ENCODE measurements at regions of chr2 and their contacts with region 1.

Region 1: DNA sequence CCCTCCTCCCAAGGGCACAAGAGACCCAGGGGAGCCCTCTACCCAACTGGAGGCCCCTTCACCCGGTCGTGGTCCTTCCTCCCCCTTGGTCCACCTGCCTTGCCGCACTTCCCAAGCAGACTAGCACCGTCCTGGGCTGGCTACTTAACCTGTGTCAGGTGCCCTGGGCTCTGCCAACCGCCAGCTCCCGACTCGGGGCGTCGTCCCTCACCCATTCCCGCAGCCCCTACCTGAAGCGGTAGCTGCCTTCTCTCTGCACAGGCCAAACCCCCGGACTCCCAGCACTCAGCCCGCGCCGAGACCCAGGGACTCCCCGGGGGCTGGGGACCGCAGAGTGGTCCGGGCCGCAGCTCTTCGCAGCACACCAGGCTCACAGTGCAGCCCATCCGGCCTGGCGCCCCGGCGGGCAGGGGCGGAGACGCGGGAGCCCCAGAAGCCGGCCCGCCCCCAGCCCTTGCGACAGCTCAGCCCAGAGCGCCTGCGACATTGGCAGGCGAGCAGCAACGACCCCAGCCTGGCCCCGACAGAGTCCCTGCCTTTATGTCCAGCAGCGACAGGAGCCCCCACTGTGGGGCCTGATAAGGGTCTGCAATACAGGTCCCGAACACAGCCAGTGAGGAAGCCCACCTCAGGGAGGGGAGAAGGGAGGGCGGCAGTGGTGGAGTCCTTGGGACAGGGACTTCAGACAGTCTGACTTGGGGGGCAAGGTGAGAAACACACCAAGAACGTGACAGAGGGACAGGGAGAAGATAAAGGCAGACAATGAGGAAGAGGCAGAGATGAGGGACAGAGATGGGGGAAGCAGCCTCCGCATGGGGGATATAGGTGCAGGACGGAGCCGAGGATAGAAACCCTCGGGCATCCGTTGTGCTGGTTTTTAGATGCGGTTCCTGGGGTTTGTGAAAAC is 31.0 kb upstream of the TNS1 start:
- DNase-seq: no peak
- H3K4me3 Mint-ChIP-seq: peak overlapping the region; percentile 58
- H3K27ac Mint-ChIP-seq: no peak overlapping the region
- H3K4me1 Mint-ChIP-seq: peaks cover 3% of the 10 kb centered on the region
- H3K27me3 Mint-ChIP-seq: no peaks in the 10 kb centered on the region

Region 2: GRCh38 chr2:217851191-217852020 is 182.4 kb before region 1 on chr2:
- CTCF ChIA-PET with region 1: no interaction called
- intact Hi-C with region 1: no loop called
- DNase-seq: no peak
- H3K4me3 Mint-ChIP-seq: no peak overlapping the region
- H3K27ac Mint-ChIP-seq: no peak overlapping the region
- H3K4me1 Mint-ChIP-seq: no peaks in the 10 kb centered on the region
- H3K27me3 Mint-ChIP-seq: peaks cover 2% of the 10 kb centered on the region

Region 3: GRCh38 chr2:217886720-217887309 is 147.0 kb before region 1 on chr2:
- CTCF ChIA-PET with region 1: interaction called, 5 read pairs
- intact Hi-C with region 1: loop called (anchors 2 kb)
- DNase-seq: peak; percentile 84
- H3K4me3 Mint-ChIP-seq: no peak overlapping the region
- H3K27ac Mint-ChIP-seq: no peak overlapping the region
- H3K4me1 Mint-ChIP-seq: no peaks in the 10 kb centered on the region
- H3K27me3 Mint-ChIP-seq: no peaks in the 10 kb centered on the region

Region 4: DNA sequence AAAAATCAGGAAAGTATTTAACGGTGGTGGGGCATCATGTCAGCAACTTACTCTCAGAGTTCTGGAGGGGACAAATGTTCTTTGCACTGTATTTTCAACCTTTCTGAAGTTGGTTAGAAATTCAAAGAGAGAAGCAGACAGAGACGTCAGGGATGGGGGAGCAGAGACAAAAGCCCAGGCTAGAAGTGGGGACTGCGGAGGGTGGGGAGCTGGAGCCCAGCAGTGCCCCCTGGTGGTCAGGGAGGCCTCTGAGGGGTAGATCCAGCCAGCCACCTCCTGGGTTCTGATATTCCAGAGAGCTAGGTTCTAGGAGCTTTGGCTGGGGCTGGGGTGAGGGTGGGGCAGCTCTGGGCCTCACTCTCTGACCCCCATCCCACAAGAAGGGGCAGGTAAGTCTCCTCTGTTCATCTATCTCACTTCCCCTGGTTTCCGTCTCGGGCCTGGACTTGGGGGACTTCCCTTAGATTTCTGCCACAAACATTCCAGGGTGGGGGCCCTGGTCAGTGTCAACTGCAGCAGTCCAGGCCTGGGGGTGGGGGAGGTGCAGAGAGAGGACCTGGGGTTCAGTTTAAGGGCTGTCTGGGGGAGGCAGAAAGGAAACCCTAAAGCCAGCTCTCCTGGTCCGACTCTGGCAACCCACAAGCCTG is 39.9 kb before region 1 on chr2:
- CTCF ChIA-PET with region 1: interaction called, 11 read pairs
- intact Hi-C with region 1: loop called (anchors 2 kb)
- DNase-seq: peak; percentile 65
- H3K4me3 Mint-ChIP-seq: no peak overlapping the region
- H3K27ac Mint-ChIP-seq: no peak overlapping the region
- H3K4me1 Mint-ChIP-seq: no peaks in the 10 kb centered on the region
- H3K27me3 Mint-ChIP-seq: no peaks in the 10 kb centered on the region

Region 5: GRCh38 chr2:218010140-218010983 is 23.5 kb before region 1 on chr2:
- CTCF ChIA-PET with region 1: interaction called, 3 read pairs
- intact Hi-C with region 1: loop called (anchors 1 kb)
- DNase-seq: peak; percentile 43
- H3K4me3 Mint-ChIP-seq: peak overlapping the region; percentile 58
- H3K27ac Mint-ChIP-seq: no peak overlapping the region
- H3K4me1 Mint-ChIP-seq: peaks cover 8% of the 10 kb centered on the region
- H3K27me3 Mint-ChIP-seq: peaks cover 27% of the 10 kb centered on the region

Region 6: DNA sequence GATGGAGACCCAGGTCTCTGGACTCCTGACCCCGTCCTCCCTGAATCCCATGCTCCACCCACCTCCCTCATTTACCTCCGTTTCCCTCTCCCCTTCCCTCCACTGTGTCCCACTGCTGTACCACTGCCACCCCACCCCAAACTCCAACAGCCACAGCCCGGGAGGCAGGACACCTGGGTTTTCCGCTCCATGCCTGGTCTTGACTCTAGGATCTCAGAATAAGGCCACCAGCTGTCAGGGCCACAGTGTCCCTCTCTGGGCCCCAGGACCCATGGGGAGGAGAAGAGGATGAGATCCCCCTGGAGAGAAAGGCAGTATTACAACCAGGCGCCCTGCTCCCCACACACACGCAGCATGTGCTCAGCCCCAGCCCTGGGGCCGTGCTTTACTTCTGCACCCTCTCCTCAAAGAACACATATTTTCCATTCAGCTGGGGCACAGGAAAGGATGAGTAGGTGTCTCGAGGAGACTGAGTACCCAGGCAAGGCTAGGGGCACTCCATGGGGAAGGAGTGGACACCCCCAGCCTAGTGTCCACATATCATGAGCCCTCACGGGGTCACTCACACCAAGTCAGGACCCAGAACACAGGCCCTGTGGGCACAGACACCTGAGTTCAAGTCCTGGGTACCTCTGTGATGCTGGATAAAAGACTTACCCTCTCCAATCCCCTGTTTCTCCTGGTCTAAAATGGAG is 35.9 kb after region 1 on chr2:
- CTCF ChIA-PET with region 1: interaction called, 4 read pairs
- intact Hi-C with region 1: loop called (anchors 2 kb)
- DNase-seq: no peak
- H3K4me3 Mint-ChIP-seq: no peak overlapping the region
- H3K27ac Mint-ChIP-seq: no peak overlapping the region
- H3K4me1 Mint-ChIP-seq: peaks cover 6% of the 10 kb centered on the region
- H3K27me3 Mint-ChIP-seq: peaks cover 6% of the 10 kb centered on the region

Measured in activated naive CD4-positive, alpha-beta T cell treated with anti-CD3 and anti-CD28 coated beads for 36 hours (primary cell).